Ovary (tissue), 10 donors: ENCODE measurements at regions of chr7 and their contacts with region 1.

Region 1: DNA sequence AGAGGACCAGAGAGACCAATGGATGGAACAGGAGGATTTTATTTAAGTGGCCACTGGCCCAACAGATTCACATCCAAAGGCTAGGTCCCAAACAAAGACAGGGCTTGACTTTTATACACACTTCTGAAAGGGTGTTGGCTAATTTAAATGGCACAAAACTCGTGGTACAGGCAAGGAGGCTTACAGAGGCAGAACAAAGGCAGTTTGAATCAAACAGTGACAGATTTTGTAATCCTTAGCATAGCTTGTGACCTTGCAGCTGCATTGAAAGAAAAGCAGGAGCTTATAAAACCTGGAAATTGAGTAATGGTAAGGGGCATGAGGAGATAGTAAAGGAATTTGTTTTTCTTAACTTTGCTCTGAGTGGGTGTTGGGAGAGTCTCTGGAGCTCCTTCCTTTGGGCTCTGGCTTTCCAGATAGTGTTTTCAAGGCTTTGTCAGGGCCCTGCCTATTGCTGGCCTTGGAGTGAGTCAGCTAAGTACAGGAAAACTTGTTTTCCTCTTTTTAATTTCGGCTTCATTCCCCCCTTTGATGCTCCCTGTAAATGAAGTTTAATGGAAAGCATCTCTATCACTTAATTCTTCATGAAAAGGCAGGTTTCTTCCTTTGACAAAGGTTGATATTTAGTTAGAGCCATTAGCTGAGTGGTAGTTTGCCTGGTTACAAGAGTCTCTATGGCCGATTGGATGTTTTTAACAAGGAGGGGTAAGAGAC is 96.9 kb downstream of the TRIM24 start:
- DNase-seq: no peak
- H3K4me3 ChIP-seq: no peak overlapping the region
- H3K27ac ChIP-seq: no peak overlapping the region
- H3K4me1 ChIP-seq: no peaks in the 10 kb centered on the region
- H3K27me3 ChIP-seq: no peaks in the 10 kb centered on the region
- CTCF ChIP-seq: no peak
- EP300 ChIP-seq: no peak
- POLR2A ChIP-seq: no peak

Region 2: DNA sequence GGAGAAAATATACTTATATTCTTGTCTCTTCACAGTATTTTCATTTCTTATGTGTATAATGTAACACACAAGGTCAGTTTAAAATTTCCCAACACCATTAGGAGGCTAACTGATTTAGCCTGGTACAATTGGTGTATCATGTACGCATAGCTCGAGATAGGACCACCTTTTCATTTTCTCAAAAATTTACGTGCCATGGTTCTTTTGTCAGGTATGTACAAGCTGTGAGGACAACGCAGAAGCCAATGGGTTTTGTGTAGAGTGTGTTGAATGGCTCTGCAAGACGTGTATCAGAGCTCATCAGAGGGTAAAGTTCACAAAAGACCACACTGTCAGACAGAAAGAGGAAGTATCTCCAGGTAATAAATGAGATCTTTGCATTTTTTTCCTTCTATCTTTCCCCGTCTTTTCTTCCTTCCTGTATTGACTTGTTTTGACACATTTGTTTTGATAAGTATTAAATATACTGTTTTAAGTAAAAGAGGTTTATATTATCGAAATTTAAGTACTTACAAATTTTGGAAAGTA is 41.9 kb before region 1 on chr7:
- intact Hi-C with region 1: loop called in 1 of 4 experiments (anchors 5 kb)
- DNase-seq: no peak
- H3K4me3 ChIP-seq: no peak overlapping the region
- H3K27ac ChIP-seq: no peak overlapping the region
- H3K4me1 ChIP-seq: peaks cover 4% of the 10 kb centered on the region
- H3K27me3 ChIP-seq: no peaks in the 10 kb centered on the region
- CTCF ChIP-seq: no peak
- EP300 ChIP-seq: no peak
- POLR2A ChIP-seq: no peak